ENCODE measurements at regions of chr4 and their contacts with region 1.

Region 1: GRCh38 chr4:158253350-158253980 is 43.2 kb downstream of the TMEM144 start:
- DNase-seq: no peak
- ATAC-seq: peak in 2 of 4 donors; percentile 64 to 81
- H3K4me3 ChIP-seq: no peak overlapping the region
- H3K27ac ChIP-seq: no peak overlapping the region
- H3K4me1 ChIP-seq: no peaks in the 10 kb centered on the region
- H3K27me3 ChIP-seq: no peaks in the 10 kb centered on the region
- CTCF ChIP-seq: peak; percentile 67

Region 2: DNA sequence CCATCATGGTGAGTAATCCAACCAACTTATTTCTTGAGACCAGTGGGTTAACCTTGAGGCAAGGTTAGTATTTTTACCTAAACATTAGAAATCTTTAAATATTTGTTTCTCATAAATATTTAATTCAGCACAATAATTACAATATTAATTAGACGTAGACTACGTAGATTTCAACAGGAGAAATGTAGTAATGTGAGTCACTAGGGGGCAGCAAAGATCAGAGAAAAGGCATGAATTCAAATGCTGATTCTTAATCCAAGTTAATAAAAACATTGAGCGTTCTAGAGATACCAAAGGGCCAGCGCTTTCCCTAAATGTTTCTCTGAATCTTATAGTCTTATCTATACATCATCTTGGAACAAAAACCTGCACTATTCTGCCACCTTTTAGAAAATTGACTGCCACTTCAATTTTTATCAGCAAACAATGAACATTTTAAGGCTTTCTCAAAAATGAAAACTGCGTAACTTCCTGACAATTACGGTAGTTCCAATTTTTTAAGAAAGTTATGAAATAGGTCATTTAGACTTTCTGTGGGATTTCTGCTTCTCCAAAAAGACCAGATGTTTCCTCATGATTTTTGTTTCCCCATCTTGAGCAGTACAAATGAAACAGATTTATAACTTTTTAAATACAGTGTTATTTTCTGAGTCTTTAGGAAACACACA is 261.3 kb before region 1 on chr4:
- intact Hi-C with region 1: loop called (anchors 2 to 10 kb)
- DNase-seq: no peak
- ATAC-seq: peak in 3 of 4 donors; percentile 40 to 78 (median 59)
- H3K4me3 ChIP-seq: peak overlapping the region; percentile 49
- H3K27ac ChIP-seq: peak overlapping the region; percentile 39
- H3K4me1 ChIP-seq: no peaks in the 10 kb centered on the region
- H3K27me3 ChIP-seq: no peaks in the 10 kb centered on the region
- CTCF ChIP-seq: peak; percentile 69

Region 3: DNA sequence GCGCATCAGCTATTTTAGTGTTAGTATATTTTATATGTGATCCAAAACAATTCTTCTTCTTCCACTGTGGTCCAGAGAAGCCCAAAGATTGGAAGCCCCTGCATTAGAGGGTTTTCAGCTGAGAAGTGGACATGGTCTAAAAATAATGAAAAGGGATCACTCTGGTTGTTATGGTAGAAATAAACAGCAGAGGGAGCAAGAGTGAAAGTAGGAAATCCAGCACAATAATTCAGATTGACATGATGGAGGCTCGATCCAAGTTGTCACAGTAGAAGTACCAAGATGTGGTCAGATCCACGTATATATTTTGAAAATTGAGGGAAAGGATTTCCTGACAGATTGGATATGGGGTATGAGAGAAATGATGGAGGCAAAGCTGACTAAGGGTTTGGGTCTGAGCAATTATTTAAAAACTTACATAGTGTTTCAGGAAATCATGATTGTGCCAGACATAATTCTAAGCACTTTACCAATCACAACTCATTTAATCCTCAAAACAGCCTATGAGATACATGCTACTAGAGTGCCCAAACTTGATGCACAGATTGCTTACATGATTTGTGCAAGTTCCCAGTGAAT is 60.2 kb before region 1 on chr4:
- intact Hi-C with region 1: loop called (anchors 2 to 5 kb)
- DNase-seq: no peak
- ATAC-seq: peak in 3 of 4 donors; percentile 57 to 83 (median 73)
- H3K4me3 ChIP-seq: no peak overlapping the region
- H3K27ac ChIP-seq: no peak overlapping the region
- H3K4me1 ChIP-seq: no peaks in the 10 kb centered on the region
- H3K27me3 ChIP-seq: no peaks in the 10 kb centered on the region
- CTCF ChIP-seq: peak; percentile 52

Region 4: GRCh38 chr4:158209825-158210807 is 43.3 kb before region 1 on chr4 and contains the start of gene TMEM144:
- intact Hi-C with region 1: loop called in 1 of 2 experiments (anchors 5 kb)
- DNase-seq: peak; percentile 90 to 92
- ATAC-seq: peak; percentile 98 to 100 (median 99)
- H3K4me3 ChIP-seq: peak within 1 kb of the TSS; percentile 66
- H3K27ac ChIP-seq: peak within 1 kb of the TSS; percentile 88
- H3K4me1 ChIP-seq: peaks cover 9% of the 10 kb centered on the region
- H3K27me3 ChIP-seq: no peaks in the 10 kb centered on the region
- CTCF ChIP-seq: no peak
- total RNA-seq, gene TMEM144: 0.88 to 1.9 (median 1.4) TPM

Region 5: DNA sequence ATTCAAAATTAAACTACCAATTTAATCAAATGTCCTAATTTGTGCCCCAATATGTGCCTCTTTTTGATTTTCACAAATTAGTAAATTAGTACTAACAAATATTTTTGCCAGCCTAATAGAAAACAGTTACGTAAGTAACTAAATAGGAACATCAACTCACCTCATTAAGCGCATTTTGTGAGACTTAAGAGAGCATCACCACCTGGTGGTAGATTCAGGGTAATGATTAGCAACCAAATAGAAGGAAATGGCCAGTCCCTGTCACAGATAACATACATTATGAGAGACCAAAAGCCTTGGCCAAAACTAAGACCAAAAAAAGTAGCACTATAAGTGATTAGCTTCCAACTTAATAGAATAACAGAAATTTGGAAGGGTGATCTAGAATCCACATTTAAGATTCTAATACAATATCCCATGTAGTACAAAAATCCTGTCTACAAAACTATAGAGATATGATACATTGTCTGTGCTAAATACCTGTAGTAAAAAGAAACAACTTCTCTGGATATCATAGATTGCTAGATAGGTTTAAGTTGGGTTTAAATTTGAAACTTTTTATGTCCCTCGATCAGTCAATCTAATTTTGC is 371.5 kb after region 1 on chr4:
- intact Hi-C with region 1: loop called (anchors 2 to 5 kb)
- DNase-seq: no peak
- ATAC-seq: peak; percentile 81 to 93 (median 84)
- H3K4me3 ChIP-seq: peak overlapping the region; percentile 15
- H3K27ac ChIP-seq: peak overlapping the region; percentile 75
- H3K4me1 ChIP-seq: peaks cover 20% of the 10 kb centered on the region
- H3K27me3 ChIP-seq: no peaks in the 10 kb centered on the region
- CTCF ChIP-seq: peak; percentile 76

Measured in psoas muscle (tissue), 8 donors.